Psoas muscle (tissue), 8 donors: ENCODE measurements at regions of chr16 and their contacts with region 1.

Region 1: DNA sequence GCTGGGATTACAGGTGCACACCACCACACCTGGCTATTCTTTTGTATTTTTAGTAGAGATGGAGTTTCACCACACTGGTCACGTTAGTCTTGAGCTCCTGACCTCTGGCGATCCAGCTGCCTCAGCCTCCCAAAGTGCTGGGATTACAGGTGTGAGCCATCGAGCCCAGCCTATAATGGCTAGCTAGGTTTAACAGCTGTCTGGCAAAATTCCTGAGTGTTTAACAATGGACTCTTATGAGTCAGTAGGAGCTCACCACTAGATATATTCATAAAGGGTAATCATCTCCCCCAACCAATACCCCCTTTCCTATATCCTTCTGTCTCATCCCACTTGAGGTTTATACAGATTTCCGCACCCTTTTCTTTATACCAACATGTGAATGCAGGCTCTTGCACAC is 91.5 kb upstream of the CDH13 start:
- DNase-seq: no peak
- ATAC-seq: no peak
- H3K4me3 ChIP-seq: no peak overlapping the region
- H3K27ac ChIP-seq: no peak overlapping the region
- H3K4me1 ChIP-seq: no peaks in the 10 kb centered on the region
- H3K27me3 ChIP-seq: no peaks in the 10 kb centered on the region
- CTCF ChIP-seq: no peak

Region 2: GRCh38 chr16:81376880-81377279 is 1158.4 kb before region 1 on chr16:
- intact Hi-C with region 1: loop called in 1 of 2 experiments (anchors 10 kb)
- DNase-seq: no peak
- ATAC-seq: no peak
- H3K4me3 ChIP-seq: no peak overlapping the region
- H3K27ac ChIP-seq: no peak overlapping the region
- H3K4me1 ChIP-seq: no peaks in the 10 kb centered on the region
- H3K27me3 ChIP-seq: no peaks in the 10 kb centered on the region
- CTCF ChIP-seq: no peak